Activated naive CD4-positive, alpha-beta T cell treated with anti-CD3 and anti-CD28 coated beads for 36 hours (primary cell): ENCODE measurements at regions of chr2 and their contacts with region 1.

Region 1: DNA sequence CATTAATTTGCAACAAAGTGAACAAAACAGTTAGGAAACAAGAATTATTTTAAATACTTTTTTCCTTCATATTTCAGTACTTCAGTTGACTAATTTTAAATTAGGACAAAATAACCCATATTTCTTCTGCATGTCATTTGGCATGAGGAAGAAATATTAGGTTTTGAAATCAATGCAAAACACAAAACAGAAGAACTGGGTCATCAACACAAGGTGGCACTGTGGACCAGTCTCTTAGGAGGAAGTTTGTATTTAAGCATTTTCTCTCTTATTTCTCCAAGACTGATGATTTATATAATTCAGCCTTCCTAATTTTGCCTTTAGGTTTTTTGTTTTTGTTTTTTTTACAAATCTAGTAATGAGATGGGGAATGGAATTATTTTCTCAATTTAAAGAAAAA is 352.8 kb upstream of the KCNH7 start:
- DNase-seq: peak; percentile 17
- H3K4me3 Mint-ChIP-seq: no peak overlapping the region
- H3K27ac Mint-ChIP-seq: no peak overlapping the region
- H3K4me1 Mint-ChIP-seq: no peaks in the 10 kb centered on the region
- H3K27me3 Mint-ChIP-seq: no peaks in the 10 kb centered on the region

Region 2: DNA sequence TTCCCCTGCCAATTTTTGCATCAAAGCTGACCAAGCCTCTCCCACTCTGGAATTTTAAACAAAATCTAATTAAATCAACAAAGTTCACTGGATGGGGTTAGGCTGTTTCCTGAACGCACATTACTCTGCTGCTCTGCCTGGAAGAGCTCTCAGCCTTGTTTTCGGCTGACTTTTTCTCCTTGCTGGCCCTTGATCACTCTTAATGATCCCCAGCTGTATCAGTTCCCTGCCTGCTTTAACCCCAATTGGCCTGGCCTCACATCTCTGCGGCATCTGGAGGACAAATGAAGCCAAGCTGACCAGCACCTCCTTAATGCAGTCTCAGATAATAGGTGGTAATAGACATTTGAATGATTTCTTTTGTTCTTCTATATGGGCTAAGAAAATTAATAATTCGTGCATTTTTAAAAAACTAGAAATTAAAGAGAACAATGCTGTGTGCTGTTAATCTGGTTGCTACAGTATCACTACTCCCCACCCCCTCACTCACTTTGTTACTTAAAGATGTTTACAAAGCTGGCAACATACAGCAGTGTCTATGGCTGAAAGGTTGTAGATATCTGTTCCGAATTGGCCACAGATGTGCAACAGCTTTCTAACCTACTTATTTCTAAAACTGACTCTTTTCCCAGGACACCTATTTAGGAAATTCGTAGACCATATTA is 62.4 kb after region 1 on chr2:
- CTCF ChIA-PET with region 1: no interaction called
- intact Hi-C with region 1: no loop called
- DNase-seq: no peak
- H3K4me3 Mint-ChIP-seq: no peak overlapping the region
- H3K27ac Mint-ChIP-seq: no peak overlapping the region
- H3K4me1 Mint-ChIP-seq: no peaks in the 10 kb centered on the region
- H3K27me3 Mint-ChIP-seq: no peaks in the 10 kb centered on the region

Region 3: DNA sequence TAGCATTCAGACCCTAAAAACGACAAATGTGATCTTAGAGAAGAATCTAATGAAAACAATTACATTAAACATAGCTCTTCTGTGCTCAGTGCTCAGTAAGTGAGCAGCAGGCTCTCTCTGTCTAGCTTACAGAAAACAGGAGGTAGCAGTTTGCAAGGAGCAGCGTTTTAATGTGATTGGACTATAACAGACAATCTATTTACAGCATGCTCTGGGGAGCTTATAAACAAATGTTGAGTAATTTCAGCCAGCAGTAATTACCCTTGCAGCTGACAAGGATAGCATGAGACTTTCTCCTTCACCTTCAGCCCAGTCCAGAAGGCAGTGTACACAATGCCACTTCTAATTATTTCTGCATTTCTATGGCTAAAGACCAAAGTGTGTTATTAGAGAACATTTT is 274.1 kb after region 1 on chr2:
- CTCF ChIA-PET with region 1: no interaction called
- intact Hi-C with region 1: no loop called
- DNase-seq: no peak
- H3K4me3 Mint-ChIP-seq: no peak overlapping the region
- H3K27ac Mint-ChIP-seq: no peak overlapping the region
- H3K4me1 Mint-ChIP-seq: no peaks in the 10 kb centered on the region
- H3K27me3 Mint-ChIP-seq: peaks cover 3% of the 10 kb centered on the region

Region 4: DNA sequence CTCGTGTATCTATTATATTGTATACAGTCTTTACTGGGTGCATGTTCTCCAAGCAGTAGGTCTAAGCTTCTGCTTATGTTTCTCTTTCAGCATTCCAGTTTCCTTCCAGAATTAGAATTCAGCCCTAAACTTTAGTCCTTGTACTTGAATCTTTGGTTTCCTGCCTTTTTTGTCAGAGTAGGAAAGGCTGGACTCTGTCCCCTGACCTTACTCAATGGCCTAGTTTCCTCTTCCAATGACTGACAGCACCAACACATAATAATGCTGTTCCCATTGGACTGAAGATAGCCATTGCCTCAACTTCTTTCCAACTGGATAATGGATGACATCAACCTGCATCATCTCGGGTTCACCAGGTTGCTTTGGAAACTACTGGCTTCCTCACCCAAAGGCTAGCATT is 327.4 kb after region 1 on chr2:
- CTCF ChIA-PET with region 1: no interaction called
- intact Hi-C with region 1: no loop called
- DNase-seq: no peak
- H3K4me3 Mint-ChIP-seq: no peak overlapping the region
- H3K27ac Mint-ChIP-seq: no peak overlapping the region
- H3K4me1 Mint-ChIP-seq: no peaks in the 10 kb centered on the region
- H3K27me3 Mint-ChIP-seq: no peaks in the 10 kb centered on the region

Region 5: DNA sequence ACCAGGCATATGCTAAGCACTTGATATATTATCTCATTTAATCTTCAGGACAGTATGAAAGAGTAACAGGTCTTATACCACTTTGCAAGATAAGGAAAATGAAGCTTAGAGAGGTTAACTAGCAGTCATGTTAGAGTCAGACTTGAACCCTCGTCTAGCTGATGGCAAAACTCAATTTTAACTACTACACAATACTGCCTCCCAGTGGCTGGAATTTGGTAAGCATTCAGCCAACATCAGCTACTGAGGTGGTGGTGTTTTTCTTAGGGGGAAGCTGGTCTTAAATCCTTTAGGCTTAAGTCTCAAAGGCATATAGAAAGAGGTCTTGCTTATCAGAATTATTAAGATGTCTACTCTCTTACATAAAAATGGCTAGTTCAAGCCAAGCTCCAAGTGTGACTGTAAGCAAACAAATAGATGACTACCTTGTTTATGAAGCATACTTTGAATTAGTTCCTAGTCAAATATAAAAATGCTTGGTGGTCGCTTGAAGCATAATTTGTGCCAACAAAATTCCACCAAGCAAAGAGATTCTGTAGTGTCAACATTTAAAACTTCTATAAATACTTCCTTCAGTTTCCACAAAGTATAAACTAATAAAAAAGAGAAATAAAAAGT is 869.9 kb after region 1 on chr2:
- CTCF ChIA-PET with region 1: no interaction called
- intact Hi-C with region 1: loop called (anchors 2 kb)
- DNase-seq: no peak
- H3K4me3 Mint-ChIP-seq: no peak overlapping the region
- H3K27ac Mint-ChIP-seq: no peak overlapping the region
- H3K4me1 Mint-ChIP-seq: no peaks in the 10 kb centered on the region
- H3K27me3 Mint-ChIP-seq: no peaks in the 10 kb centered on the region

Region 6: GRCh38 chr2:164479460-164479859 is 1288.1 kb after region 1 on chr2:
- CTCF ChIA-PET with region 1: no interaction called
- intact Hi-C with region 1: loop called (anchors 2 kb)
- DNase-seq: no peak
- H3K4me3 Mint-ChIP-seq: no peak overlapping the region
- H3K27ac Mint-ChIP-seq: no peak overlapping the region
- H3K4me1 Mint-ChIP-seq: no peaks in the 10 kb centered on the region
- H3K27me3 Mint-ChIP-seq: no peaks in the 10 kb centered on the region

Region 7: GRCh38 chr2:164538240-164538866 is 1347.0 kb after region 1 on chr2:
- CTCF ChIA-PET with region 1: no interaction called
- intact Hi-C with region 1: loop called (anchors 2 kb)
- DNase-seq: no peak
- H3K4me3 Mint-ChIP-seq: no peak overlapping the region
- H3K27ac Mint-ChIP-seq: no peak overlapping the region
- H3K4me1 Mint-ChIP-seq: no peaks in the 10 kb centered on the region
- H3K27me3 Mint-ChIP-seq: no peaks in the 10 kb centered on the region